ENCODE measurements at regions of chr22 and their contacts with region 1.

Region 1: GRCh38 chr22:33519071-33519973 is 401.0 kb downstream of the LARGE1 start:
- DNase-seq: no peak
- H3K4me3 ChIP-seq: no peak overlapping the region
- H3K27ac ChIP-seq: no peak overlapping the region
- H3K4me1 ChIP-seq: peaks cover 11 to 16% (median 12%) of the 10 kb centered on the region in 4 donors
- H3K27me3 ChIP-seq: no peaks in the 10 kb centered on the region
- CTCF ChIP-seq: peak; percentile 61 to 63 (median 62)
- EP300 ChIP-seq: no peak
- POLR2A ChIP-seq: no peak

Region 2: GRCh38 chr22:33472462-33473344 is 46.6 kb before region 1 on chr22:
- intact Hi-C with region 1: no loop called
- DNase-seq: no peak
- H3K4me3 ChIP-seq: no peak overlapping the region
- H3K27ac ChIP-seq: no peak overlapping the region
- H3K4me1 ChIP-seq: peaks cover 7 to 28% (median 10%) of the 10 kb centered on the region in 4 donors
- H3K27me3 ChIP-seq: no peaks in the 10 kb centered on the region
- CTCF ChIP-seq: no peak
- EP300 ChIP-seq: no peak
- POLR2A ChIP-seq: no peak

Region 3: GRCh38 chr22:33579448-33580093 is 60.2 kb after region 1 on chr22:
- intact Hi-C with region 1: loop called (anchors 2 kb)
- DNase-seq: no peak
- H3K4me3 ChIP-seq: no peak overlapping the region
- H3K27ac ChIP-seq: no peak overlapping the region
- H3K4me1 ChIP-seq: peaks cover 10 to 23% (median 16%) of the 10 kb centered on the region in 4 donors
- H3K27me3 ChIP-seq: no peaks in the 10 kb centered on the region
- CTCF ChIP-seq: peak; percentile 77 to 93 (median 86)
- EP300 ChIP-seq: no peak
- POLR2A ChIP-seq: no peak

Region 4: GRCh38 chr22:34105461-34106062 is 586.2 kb after region 1 on chr22:
- intact Hi-C with region 1: loop called (anchors 5 kb)
- DNase-seq: peak; percentile 89
- H3K4me3 ChIP-seq: no peak overlapping the region
- H3K27ac ChIP-seq: no peak overlapping the region
- H3K4me1 ChIP-seq: peaks cover 0 to 7% (median 0%) of the 10 kb centered on the region in 4 donors
- H3K27me3 ChIP-seq: peaks cover 0 to 30% (median 0%) of the 10 kb centered on the region in 4 donors
- CTCF ChIP-seq: peak; percentile 68 to 80 (median 68)
- EP300 ChIP-seq: no peak
- POLR2A ChIP-seq: no peak

Measured in esophagus muscularis mucosa (tissue), 4 donors.